Mucosa of descending colon (tissue), 3 donors: ENCODE measurements at regions of chrX and their contacts with region 1.

Region 1: DNA sequence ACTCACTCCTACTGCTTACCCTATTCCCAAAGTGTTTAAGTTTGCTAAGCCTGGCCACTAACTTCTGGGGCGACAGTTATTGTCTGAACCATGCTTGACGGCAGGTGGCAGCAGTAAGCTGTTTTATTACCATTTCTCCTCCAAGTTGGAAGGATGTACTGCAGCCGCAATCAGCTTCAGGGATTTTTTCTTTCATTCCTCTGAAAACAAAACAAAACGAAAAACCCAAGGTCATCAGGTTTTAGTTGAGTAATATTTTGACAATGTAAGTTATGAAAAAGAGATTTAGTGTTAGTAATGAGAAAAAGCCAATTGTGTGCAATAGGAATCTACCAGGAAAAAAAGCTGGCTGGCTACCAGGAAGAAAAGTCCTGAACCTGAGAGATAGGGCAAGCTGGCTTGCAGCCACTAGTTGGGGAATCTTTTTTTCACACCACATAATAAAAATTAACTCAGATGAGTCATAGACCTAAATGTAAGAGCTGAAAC is 13.2 kb upstream of the RAB9B start:
- DNase-seq: peak; percentile 23 to 78 (median 57)
- ATAC-seq: peak; percentile 88
- H3K4me3 ChIP-seq: no peak overlapping the region
- H3K4me1 ChIP-seq: no peaks in the 10 kb centered on the region
- CTCF ChIP-seq: peak; percentile 13

Region 2: DNA sequence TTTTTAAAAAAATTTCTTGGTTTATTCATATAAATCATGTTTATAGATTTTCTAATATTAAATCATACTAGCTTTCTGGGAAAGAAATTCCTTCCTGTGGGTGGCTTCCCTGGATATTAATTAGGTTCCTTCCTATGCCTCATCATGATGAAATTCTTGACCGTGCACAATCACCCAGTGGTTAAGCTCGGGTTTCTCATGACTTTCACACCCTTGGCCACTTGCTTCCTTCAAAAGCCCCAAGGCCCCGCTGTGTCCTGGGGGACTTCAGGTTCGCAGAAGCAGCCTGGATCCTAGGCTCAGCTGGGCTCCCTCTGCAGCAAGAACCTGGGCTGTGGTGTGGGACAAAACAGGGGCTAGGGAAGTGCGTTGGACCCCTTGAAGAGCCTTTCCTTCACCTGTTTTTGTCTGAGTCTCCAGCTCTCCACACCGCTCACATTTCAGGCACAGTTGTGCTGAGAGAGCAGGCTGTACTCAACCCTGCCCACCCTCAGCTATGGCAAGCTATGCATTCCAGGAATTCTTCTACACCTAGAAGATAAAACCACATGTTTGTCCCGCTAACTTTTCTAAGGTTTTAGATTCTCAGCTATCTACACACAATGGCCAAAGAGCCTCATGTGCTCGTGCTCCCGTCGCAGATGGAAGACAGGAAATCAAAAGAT is 68.3 kb after region 1 on chrX:
- intact Hi-C with region 1: no loop called
- DNase-seq: no peak
- ATAC-seq: no peak
- H3K4me3 ChIP-seq: no peak overlapping the region
- H3K4me1 ChIP-seq: no peaks in the 10 kb centered on the region
- CTCF ChIP-seq: no peak

Region 3: DNA sequence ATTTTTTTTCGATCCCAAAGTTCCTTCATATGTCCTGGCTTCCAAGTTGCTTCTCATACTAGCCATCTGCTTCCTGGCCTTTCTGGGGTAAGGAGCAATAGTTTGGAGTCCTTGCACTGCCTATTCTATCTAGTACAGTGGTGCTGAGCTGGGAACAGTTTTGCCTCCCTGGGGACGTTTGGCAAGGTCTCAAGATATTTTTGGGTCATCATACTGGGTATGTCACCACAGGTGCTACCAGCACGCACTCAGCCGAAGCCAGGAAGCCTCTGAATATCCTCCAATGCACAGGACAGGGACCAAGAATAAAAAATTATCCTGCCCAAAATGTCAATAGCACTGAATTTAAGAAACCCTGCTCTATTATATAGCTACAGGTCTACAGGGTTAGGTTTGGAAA is 81.8 kb after region 1 on chrX:
- intact Hi-C with region 1: no loop called
- DNase-seq: no peak
- ATAC-seq: no peak
- H3K4me3 ChIP-seq: no peak overlapping the region
- H3K4me1 ChIP-seq: no peaks in the 10 kb centered on the region
- CTCF ChIP-seq: no peak

Region 4: DNA sequence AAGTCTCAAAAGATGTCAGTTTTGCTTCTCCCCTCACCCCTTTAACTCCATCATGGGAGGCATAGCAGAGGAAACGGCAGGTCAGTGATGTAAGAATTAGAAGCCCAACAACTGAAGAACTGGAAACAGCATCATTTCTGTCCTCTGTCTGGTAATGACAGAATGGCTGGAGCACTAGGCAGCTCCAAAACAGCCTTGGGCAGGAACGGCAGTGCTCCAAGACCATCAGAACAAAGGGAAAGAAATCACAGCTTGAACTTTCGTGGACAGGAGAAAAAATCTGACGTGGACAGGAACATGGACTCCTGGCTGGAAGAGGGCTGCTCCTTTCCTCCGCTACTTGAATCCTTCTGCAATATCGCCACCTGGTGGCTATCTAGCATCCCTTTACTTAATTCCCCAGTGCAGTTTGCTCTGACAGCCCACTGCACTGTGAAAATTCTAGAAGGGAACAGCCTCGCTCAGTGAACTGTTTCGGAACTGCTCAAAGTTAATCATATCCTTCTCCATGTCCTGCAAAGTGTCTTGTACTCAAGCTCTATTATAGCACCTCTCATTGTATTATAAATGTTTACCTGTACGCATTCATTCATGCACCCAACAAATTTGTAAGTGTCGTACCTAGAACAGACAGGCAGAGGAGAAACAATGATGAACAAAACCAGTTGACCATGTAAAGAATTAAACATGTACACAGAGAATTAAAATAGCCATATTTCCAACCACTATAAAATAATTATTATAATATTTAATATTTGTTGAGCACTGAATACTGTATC is 291.2 kb after region 1 on chrX:
- intact Hi-C with region 1: loop called in 1 of 2 experiments (anchors 5 kb)
- DNase-seq: peak in 1 of 3 donors; percentile 74
- ATAC-seq: peak; percentile 89
- H3K4me3 ChIP-seq: no peak overlapping the region
- H3K4me1 ChIP-seq: no peaks in the 10 kb centered on the region
- CTCF ChIP-seq: no peak